Panc1 (cell line): ENCODE measurements at regions of chr3 and their contacts with region 1.

Region 1: DNA sequence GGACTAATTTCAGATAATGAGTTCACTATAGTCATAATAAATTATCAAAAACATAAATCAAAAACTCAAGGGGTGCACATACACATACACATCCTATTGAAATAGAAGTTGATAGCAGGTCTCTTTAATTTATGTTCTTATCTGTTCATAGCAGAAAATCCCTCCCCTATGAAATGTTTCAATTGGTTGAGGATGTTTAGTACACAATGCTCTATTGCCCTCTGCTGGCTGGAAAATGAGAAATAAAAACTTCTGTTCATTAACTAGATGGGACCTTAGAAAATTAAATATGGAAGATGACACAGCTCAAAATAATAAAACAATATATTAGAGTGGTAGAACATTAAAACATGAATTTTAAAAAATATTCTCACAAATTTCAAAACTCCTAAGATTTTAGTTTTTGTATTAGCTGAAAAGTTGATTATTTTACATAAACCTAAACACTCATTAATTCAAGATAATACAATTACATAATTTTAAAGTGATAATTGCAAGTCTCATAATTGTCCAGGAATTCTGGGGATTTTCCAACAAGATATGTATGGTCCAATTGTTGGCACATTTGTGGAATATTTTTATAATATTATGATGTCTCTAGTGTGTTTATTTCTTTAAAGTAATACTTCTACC is 735.0 kb downstream of the ROBO1 start:
- DNase-seq: no peak
- ATAC-seq: no peak; the same call in 1 of the 2 replicates
- H3K4me3 ChIP-seq: no peak overlapping the region
- H3K27ac ChIP-seq: no peak overlapping the region
- H3K4me1 ChIP-seq: no peaks in the 10 kb centered on the region
- H3K27me3 ChIP-seq: no peaks in the 10 kb centered on the region
- CTCF ChIP-seq: peak; percentile 59; the same call in 1 of the 2 replicates

Region 2: DNA sequence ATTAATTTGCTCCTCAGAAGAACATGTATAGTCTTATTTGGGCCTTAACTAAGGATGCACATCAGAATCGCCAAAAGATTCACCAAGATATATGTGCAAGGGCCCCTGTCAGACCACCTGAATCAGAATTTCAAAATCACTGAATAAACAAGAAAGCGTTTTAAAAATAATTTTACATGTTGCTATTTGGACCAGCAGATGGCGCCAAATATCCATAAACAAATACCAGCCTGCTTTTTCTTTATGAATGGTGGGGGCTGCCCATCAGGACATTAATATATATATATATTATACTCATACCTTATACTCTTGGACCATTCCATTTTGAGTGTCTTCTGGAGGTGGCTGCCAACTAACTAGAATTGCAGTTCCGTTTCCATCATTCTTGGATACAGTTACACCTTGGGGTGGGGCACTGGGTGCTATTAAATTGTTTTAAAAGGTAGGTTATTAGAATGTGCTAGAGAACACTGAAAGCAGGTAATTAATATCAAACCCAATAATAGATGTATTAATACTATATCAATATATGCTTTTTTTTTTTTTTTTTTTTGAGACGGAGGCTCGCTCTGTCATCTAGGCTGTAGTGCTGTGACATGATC is 373.3 kb before region 1 on chr3:
- CTCF ChIA-PET with region 1: no interaction called
- POLR2A ChIA-PET with region 1: no interaction called
- in situ Hi-C with region 1: no loop called
- intact Hi-C with region 1: loop called (anchors 1 kb)
- DNase-seq: no peak
- ATAC-seq: no peak
- H3K4me3 ChIP-seq: no peak overlapping the region
- H3K27ac ChIP-seq: no peak overlapping the region
- H3K4me1 ChIP-seq: no peaks in the 10 kb centered on the region
- H3K27me3 ChIP-seq: no peaks in the 10 kb centered on the region
- CTCF ChIP-seq: peak; percentile 44; the same call in 1 of the 2 replicates